CD4-positive, alpha-beta memory T cell (primary cell): ENCODE measurements at regions of chr1 and their contacts with region 1.

Region 1: DNA sequence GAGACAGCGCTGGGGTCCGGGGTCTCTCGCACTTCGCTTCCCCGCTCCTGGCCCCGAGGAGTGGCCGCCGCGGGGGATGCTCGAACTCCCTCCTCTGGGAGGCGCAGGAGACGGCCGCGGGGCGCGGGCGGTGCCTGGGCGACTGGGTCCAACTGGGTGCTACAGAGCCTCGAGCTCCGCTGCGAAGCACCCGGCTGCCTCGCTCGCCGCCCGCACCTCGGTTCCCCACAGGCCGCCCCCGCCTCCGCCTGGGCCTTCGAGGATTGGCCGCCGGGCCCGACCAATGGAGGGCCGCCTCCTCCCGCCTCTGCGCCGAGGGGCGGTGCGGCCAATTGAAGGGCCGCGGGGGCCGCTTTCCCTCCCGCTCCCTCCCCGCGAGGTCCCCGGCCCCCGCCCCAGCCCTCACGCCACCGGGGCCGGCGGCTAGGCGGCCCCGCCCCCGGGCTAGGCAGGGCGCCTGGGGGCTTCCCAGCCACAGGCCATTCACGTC is at the start of gene CNN3:
- DNase-seq: peak; percentile 36 to 61 (median 47)
- H3K4me3 ChIP-seq: peak within 1 kb of the TSS in 1 of 2 donors; percentile 35
- H3K4me3 Mint-ChIP-seq: peak within 1 kb of the TSS; percentile 84 to 92 (median 90)
- H3K27ac ChIP-seq: no peak within 1 kb of the TSS
- H3K27ac Mint-ChIP-seq: peak within 1 kb of the TSS in 6 of 7 donors; percentile 5 to 71 (median 60)
- H3K4me1 ChIP-seq: peaks cover 7% of the 10 kb centered on the region
- H3K4me1 Mint-ChIP-seq: peaks cover 9 to 24% (median 17%) of the 10 kb centered on the region in 4 donors
- H3K27me3 ChIP-seq: peaks cover 17% of the 10 kb centered on the region
- H3K27me3 Mint-ChIP-seq: peaks cover 27 to 34% of the 10 kb centered on the region in 2 donors
- total RNA-seq, gene CNN3: 2.6 to 3.2 TPM

Region 2: GRCh38 chr1:94962409-94963265 is 35.7 kb after region 1 on chr1:
- CTCF ChIA-PET with region 1: no interaction called
- POLR2A ChIA-PET with region 1: no interaction called
- intact Hi-C with region 1: loop called (anchors 5 kb)
- DNase-seq: peak in 4 of 5 donors; percentile 8 to 33 (median 26)
- H3K4me3 ChIP-seq: peak overlapping the region; percentile 58 to 68
- H3K4me3 Mint-ChIP-seq: peak overlapping the region; percentile 86 to 99 (median 94)
- H3K27ac ChIP-seq: peak overlapping the region; percentile 38
- H3K27ac Mint-ChIP-seq: peak overlapping the region; percentile 24 to 97 (median 92)
- H3K4me1 ChIP-seq: peaks cover 15% of the 10 kb centered on the region
- H3K4me1 Mint-ChIP-seq: peaks cover 4 to 12% (median 6%) of the 10 kb centered on the region in 4 donors
- H3K27me3 ChIP-seq: no peaks in the 10 kb centered on the region
- H3K27me3 Mint-ChIP-seq: no peaks in the 10 kb centered on the region

Region 3: DNA sequence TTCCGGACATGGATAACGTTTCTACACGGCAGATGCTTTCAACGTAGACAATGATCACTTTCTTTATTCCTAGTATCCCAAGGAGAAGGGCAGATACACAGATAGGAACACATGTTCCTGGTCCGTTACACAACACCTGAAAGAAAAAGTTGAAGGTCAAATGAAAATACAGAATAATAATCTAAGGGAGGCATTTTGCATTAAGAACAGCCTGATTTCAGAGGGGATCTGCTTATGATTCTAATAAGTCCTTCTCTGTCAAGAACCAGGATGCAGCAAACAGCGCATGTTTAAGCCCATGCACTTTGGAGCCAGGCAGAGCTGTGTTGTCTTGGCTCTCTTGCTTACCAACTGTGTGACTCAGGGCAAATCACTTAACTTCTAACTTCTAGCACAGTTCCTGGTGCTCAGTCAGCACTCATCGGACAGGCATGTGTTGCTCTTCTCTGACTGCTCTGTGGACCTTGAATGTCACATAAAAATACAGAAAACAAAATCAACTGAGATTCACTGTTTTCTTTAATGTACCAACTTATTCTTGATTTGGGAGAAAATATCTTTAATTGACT is 56.3 kb after region 1 on chr1:
- CTCF ChIA-PET with region 1: no interaction called
- POLR2A ChIA-PET with region 1: no interaction called
- intact Hi-C with region 1: loop called (anchors 10 kb)
- DNase-seq: no peak
- H3K4me3 ChIP-seq: no peak overlapping the region
- H3K4me3 Mint-ChIP-seq: no peak overlapping the region
- H3K27ac ChIP-seq: no peak overlapping the region
- H3K27ac Mint-ChIP-seq: no peak overlapping the region
- H3K4me1 ChIP-seq: peaks cover 3% of the 10 kb centered on the region
- H3K4me1 Mint-ChIP-seq: peaks cover 0 to 5% (median 4%) of the 10 kb centered on the region in 4 donors
- H3K27me3 ChIP-seq: no peaks in the 10 kb centered on the region
- H3K27me3 Mint-ChIP-seq: no peaks in the 10 kb centered on the region

Region 4: GRCh38 chr1:95043141-95043980 is 116.4 kb after region 1 on chr1:
- CTCF ChIA-PET with region 1: no interaction called
- POLR2A ChIA-PET with region 1: no interaction called
- intact Hi-C with region 1: loop called (anchors 5 kb)
- DNase-seq: peak; percentile 68 to 73 (median 72)
- H3K4me3 ChIP-seq: no peak overlapping the region
- H3K4me3 Mint-ChIP-seq: no peak overlapping the region
- H3K27ac ChIP-seq: no peak overlapping the region
- H3K27ac Mint-ChIP-seq: no peak overlapping the region
- H3K4me1 ChIP-seq: no peaks in the 10 kb centered on the region
- H3K4me1 Mint-ChIP-seq: no peaks in the 10 kb centered on the region
- H3K27me3 ChIP-seq: no peaks in the 10 kb centered on the region
- H3K27me3 Mint-ChIP-seq: no peaks in the 10 kb centered on the region

Region 5: GRCh38 chr1:95057351-95057750 is 130.4 kb after region 1 on chr1:
- CTCF ChIA-PET with region 1: no interaction called
- POLR2A ChIA-PET with region 1: no interaction called
- intact Hi-C with region 1: no loop called
- DNase-seq: no peak
- H3K4me3 ChIP-seq: no peak overlapping the region
- H3K4me3 Mint-ChIP-seq: no peak overlapping the region
- H3K27ac ChIP-seq: no peak overlapping the region
- H3K27ac Mint-ChIP-seq: no peak overlapping the region
- H3K4me1 ChIP-seq: no peaks in the 10 kb centered on the region
- H3K4me1 Mint-ChIP-seq: no peaks in the 10 kb centered on the region
- H3K27me3 ChIP-seq: no peaks in the 10 kb centered on the region
- H3K27me3 Mint-ChIP-seq: peaks cover 0 to 1% of the 10 kb centered on the region in 2 donors